HepG2 (cell line): ENCODE measurements at regions of chr11 and their contacts with region 1.

Region 1: DNA sequence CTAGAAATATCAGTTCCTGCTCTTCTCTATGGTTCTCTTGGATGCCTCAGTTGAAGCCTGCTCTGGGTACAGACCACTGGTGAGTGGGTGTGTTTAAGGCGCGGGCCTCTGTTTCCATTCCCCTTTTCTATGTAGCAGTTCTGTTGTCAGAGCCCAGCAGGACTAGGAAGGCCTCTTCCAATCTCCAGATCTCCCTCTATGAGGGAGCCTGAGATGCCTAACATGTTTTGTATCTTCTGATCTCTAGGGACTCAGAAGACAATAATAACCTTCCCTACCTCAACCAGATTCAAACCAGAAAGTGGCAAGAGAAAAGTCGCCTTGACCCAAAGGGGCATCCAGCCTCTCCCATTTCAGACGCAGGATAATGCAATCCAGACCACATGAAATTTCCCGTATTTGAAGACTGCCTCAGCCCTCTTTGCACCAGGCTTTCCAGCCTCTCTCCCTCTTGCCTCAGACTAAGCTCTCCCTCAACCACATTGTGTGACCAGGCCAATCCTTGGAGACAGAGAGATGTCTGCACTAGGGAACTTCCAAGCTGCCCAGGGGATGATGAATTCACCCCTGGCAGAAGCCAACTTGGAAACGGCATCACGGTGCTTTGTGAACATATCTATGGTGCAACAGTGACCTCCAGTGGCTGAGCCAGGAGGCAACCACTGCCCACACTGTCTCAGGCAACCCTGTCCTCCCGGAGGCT is 150.1 kb upstream of the UBASH3B start:
- DNase-seq: peak; percentile 42
- ATAC-seq: peak; percentile 99
- H3K4me3 ChIP-seq: no peak overlapping the region
- H3K27ac ChIP-seq: no peak overlapping the region
- H3K4me1 ChIP-seq: peaks cover 6% of the 10 kb centered on the region; the same call in 1 of the 2 replicates
- H3K27me3 ChIP-seq: no peaks in the 10 kb centered on the region; a peak in 1 of 5 replicates
- CTCF ChIP-seq: peak; percentile 93
- EP300 ChIP-seq: no peak
- POLR2A ChIP-seq: no peak
- RAD21 ChIP-seq: peak; percentile 85

Region 2: GRCh38 chr11:122101625-122102291 is 403.7 kb before region 1 on chr11:
- CTCF ChIA-PET with region 1: no interaction called
- POLR2A ChIA-PET with region 1: no interaction called
- in situ Hi-C with region 1: no loop called
- intact Hi-C with region 1: loop called (anchors 5 kb)
- DNase-seq: peak; percentile 20
- ATAC-seq: peak; percentile 76
- H3K4me3 ChIP-seq: no peak overlapping the region
- H3K27ac ChIP-seq: no peak overlapping the region
- H3K4me1 ChIP-seq: no peaks in the 10 kb centered on the region
- H3K27me3 ChIP-seq: no peaks in the 10 kb centered on the region
- CTCF ChIP-seq: peak; percentile 60
- EP300 ChIP-seq: no peak
- POLR2A ChIP-seq: no peak
- RAD21 ChIP-seq: no peak; the same call in 1 of the 2 replicates

Region 3: DNA sequence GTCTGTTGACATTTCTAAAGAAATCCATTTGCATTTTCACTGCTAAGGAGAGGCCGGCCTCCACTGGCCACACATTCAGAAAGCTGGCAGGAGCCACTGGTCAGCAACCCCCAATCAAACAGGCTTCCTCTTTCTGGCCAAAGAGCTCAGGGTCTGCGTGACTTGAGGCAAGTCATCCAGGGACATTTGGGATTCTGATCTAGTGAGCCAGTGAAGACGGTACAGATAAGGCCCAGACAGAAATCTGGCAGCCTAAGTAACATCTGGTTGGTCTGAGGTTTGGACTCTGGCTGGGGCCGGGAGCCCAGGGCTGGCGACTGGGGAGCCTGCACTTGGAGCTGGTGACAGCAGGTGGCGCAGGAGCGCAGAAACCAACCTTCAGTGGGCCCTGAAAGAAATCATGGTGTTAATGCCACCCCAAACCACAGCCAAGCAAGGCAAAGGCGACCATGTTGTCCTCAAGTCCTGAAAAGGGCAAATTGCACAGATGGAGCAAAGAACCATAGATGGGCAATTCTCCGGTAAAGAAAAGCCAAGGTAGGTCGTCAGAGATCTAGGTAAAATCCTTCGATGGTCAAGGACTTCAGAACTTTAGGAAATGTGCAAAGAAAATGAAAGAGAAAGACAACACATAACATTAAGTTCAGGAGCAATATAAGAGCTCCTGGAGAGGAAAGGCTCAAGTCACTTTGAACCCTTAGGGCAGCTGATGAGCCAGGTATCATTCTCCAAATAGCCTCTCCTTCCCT is 290.0 kb before region 1 on chr11:
- CTCF ChIA-PET with region 1: interaction called, 53 read pairs
- POLR2A ChIA-PET with region 1: no interaction called
- in situ Hi-C with region 1: loop called (anchors 5 kb)
- intact Hi-C with region 1: loop called (anchors 1 kb)
- DNase-seq: peak; percentile 29
- ATAC-seq: peak; percentile 98
- H3K4me3 ChIP-seq: no peak overlapping the region
- H3K27ac ChIP-seq: no peak overlapping the region
- H3K4me1 ChIP-seq: peaks cover 3% of the 10 kb centered on the region
- H3K27me3 ChIP-seq: no peaks in the 10 kb centered on the region
- CTCF ChIP-seq: peak; percentile 91
- EP300 ChIP-seq: no peak
- POLR2A ChIP-seq: no peak
- RAD21 ChIP-seq: peak; percentile 85

Region 4: GRCh38 chr11:122293296-122294023 is 212.0 kb before region 1 on chr11:
- CTCF ChIA-PET with region 1: no interaction called
- POLR2A ChIA-PET with region 1: no interaction called
- in situ Hi-C with region 1: no loop called
- intact Hi-C with region 1: loop called (anchors 2 kb)
- DNase-seq: no peak
- ATAC-seq: no peak
- H3K4me3 ChIP-seq: no peak overlapping the region
- H3K27ac ChIP-seq: no peak overlapping the region
- H3K4me1 ChIP-seq: no peaks in the 10 kb centered on the region
- H3K27me3 ChIP-seq: no peaks in the 10 kb centered on the region
- CTCF ChIP-seq: 0 out of 2 replicates have a peak, but pooled peaks have one; percentile 24
- EP300 ChIP-seq: no peak
- POLR2A ChIP-seq: no peak
- RAD21 ChIP-seq: no peak

Region 5: GRCh38 chr11:122344274-122344673 is 161.2 kb before region 1 on chr11:
- CTCF ChIA-PET with region 1: no interaction called
- POLR2A ChIA-PET with region 1: no interaction called
- in situ Hi-C with region 1: no loop called
- intact Hi-C with region 1: no loop called
- DNase-seq: no peak
- ATAC-seq: no peak
- H3K4me3 ChIP-seq: no peak overlapping the region
- H3K27ac ChIP-seq: no peak overlapping the region
- H3K4me1 ChIP-seq: no peaks in the 10 kb centered on the region
- H3K27me3 ChIP-seq: no peaks in the 10 kb centered on the region
- CTCF ChIP-seq: no peak
- EP300 ChIP-seq: no peak
- POLR2A ChIP-seq: no peak
- RAD21 ChIP-seq: no peak